AG04450 (cell line): ENCODE measurements at regions of chr10 and their contacts with region 1.

Region 1: GRCh38 chr10:52566471-52567246 is 205.9 kb downstream of the MBL2 start:
- DNase-seq: peak; percentile 23
- H3K4me3 ChIP-seq: no peak overlapping the region
- H3K27ac ChIP-seq: no peak overlapping the region
- H3K27me3 ChIP-seq: no peaks in the 10 kb centered on the region
- CTCF ChIP-seq: peak; percentile 74

Region 2: DNA sequence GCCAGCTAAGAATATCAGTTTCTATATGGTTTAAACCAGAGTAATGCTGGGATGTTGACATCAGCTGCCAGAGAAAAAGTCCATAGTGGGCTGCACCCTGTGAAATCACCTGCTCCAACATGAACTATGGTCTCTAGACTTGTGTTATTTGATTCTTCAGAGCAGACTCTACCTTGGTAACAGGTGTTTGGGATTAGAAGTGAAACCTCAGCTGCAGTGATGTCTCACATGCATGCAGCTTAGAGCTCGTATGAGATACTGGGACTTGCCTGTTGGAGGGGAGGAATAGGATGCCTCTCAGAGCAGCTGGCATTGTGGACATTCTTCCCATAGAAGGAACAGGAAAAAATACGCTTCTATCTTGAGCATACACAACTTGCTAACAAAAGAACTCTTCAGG is 580.1 kb before region 1 on chr10:
- CTCF ChIA-PET with region 1: no interaction called
- POLR2A ChIA-PET with region 1: no interaction called
- DNase-seq: no peak
- H3K4me3 ChIP-seq: no peak overlapping the region
- H3K27ac ChIP-seq: no peak overlapping the region
- H3K27me3 ChIP-seq: no peaks in the 10 kb centered on the region
- CTCF ChIP-seq: no peak

Region 3: GRCh38 chr10:52313933-52314816 is 252.5 kb before region 1 on chr10 and contains the start of gene DKK1:
- CTCF ChIA-PET with region 1: interaction called, 222 read pairs
- POLR2A ChIA-PET with region 1: no interaction called
- DNase-seq: no peak
- H3K4me3 ChIP-seq: peak within 1 kb of the TSS; percentile 95
- H3K27ac ChIP-seq: peak within 1 kb of the TSS; percentile 79
- H3K27me3 ChIP-seq: no peaks in the 10 kb centered on the region
- CTCF ChIP-seq: peak; percentile 89
- polyA plus RNA-seq, gene DKK1: 21.9 and 35.2 TPM in 2 replicates

Region 4: GRCh38 chr10:52488606-52489485 is 77.8 kb before region 1 on chr10:
- CTCF ChIA-PET with region 1: interaction called, 67 read pairs
- POLR2A ChIA-PET with region 1: no interaction called
- DNase-seq: no peak
- H3K4me3 ChIP-seq: no peak overlapping the region
- H3K27ac ChIP-seq: no peak overlapping the region
- H3K27me3 ChIP-seq: no peaks in the 10 kb centered on the region
- CTCF ChIP-seq: peak; percentile 58

Region 5: GRCh38 chr10:52578871-52579405 is 12.3 kb after region 1 on chr10:
- CTCF ChIA-PET with region 1: interaction called, 19 read pairs
- POLR2A ChIA-PET with region 1: no interaction called
- DNase-seq: peak; percentile 13
- H3K4me3 ChIP-seq: no peak overlapping the region
- H3K27ac ChIP-seq: no peak overlapping the region
- H3K27me3 ChIP-seq: no peaks in the 10 kb centered on the region
- CTCF ChIP-seq: no peak